PC-3 (cell line): ENCODE measurements at regions of chr12 and their contacts with region 1.

Region 1: DNA sequence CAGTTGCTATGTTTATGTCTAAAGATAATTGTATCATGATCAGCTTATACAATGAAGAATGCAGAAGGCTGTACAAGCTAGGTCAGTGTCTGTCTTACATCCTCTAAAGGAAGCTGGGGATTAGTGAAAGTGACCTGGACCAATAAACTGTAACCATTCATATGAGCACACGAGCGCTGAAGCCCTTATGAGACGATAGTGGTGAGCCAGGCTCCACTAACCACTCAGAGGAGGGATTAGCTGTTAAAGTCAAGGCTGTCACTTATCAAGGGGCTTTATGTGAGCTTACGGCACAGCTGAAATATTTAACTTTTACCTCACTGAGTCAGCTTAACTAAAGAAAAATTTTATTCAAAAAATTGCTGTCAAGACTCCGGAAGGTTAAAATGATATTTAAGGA is 30.3 kb downstream of the NDUFA12 start:
- DNase-seq: no peak
- ATAC-seq: no peak
- H3K4me3 ChIP-seq: no peak overlapping the region
- H3K27ac ChIP-seq: no peak overlapping the region
- H3K4me1 ChIP-seq: no peaks in the 10 kb centered on the region
- H3K27me3 ChIP-seq: no peaks in the 10 kb centered on the region
- CTCF ChIP-seq: no peak

Region 2: DNA sequence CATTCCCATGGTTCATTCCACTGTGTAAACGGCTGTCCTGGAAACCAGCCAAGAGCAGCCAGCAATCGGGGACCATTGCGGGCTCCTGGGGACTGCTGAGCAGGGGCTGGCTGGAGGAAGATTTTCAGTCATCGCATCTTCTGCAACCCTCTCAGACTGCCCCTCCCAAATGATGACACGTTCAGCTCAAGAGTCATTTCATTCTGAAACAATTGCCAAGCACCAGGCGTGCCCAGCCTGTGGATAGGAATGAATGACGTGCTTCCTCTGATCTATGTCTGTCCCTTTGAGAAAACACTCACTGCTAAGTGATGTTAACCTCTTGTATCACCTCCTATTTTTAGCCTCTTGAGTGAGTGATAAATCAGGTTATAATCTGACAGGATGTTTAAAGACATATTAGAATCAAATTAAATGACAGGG is 31.8 kb before region 1 on chr12:
- CTCF ChIA-PET with region 1: no interaction called
- POLR2A ChIA-PET with region 1: interaction called, 12 read pairs
- intact Hi-C with region 1: no loop called
- DNase-seq: peak; percentile 79
- ATAC-seq: peak; percentile 87
- H3K4me3 ChIP-seq: no peak overlapping the region
- H3K27ac ChIP-seq: 0 out of 2 replicates have a peak overlapping the region, but pooled peaks have one; percentile 32
- H3K4me1 ChIP-seq: peaks cover 9% of the 10 kb centered on the region; the same call in 1 of the 2 replicates
- H3K27me3 ChIP-seq: no peaks in the 10 kb centered on the region
- CTCF ChIP-seq: no peak